ENCODE measurements at regions of chr5 and their contacts with region 1.

Region 1: DNA sequence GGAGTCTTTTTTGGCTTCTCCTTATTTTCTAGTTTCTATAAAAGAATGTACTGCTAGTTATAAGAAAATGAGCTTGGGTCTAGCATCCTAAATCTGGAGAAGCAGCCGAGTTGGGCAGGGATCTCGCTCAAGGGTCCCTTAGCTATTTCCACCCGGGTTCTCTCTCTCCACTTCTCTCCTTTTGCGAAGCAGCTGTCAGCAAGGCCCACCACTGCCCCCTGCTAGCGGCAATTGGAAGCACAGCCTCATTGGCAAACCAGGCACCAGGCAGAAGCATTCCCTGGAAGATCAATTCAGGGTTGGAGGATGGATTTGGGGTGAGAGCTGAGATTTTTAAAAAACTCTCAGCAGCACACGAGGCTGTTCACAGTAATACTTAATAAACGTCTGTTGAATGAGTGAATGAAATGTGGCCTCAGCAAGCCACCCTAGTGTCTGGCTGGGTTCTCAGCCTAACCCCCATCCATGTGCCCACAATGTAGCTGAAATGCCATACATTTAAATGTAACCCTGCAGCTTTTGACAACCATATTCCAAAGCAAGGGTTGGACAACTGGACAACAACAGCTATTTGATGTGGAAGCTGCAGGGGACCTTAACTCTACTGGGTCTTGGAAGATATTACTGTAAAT is 34.6 kb upstream of the TNIP1 start:
- DNase-seq: peak; percentile 72 to 86 (median 80)
- H3K4me3 ChIP-seq: no peak overlapping the region
- H3K27ac ChIP-seq: no peak overlapping the region
- H3K27me3 ChIP-seq: no peaks in the 10 kb centered on the region
- CTCF ChIP-seq: peak; percentile 55 to 97 (median 92)

Region 2: GRCh38 chr5:151051066-151051930 is 64.1 kb before region 1 on chr5:
- intact Hi-C with region 1: loop called (anchors 2 kb)
- DNase-seq: peak in 9 of 10 donors; percentile 57 to 82 (median 74)
- H3K4me3 ChIP-seq: no peak overlapping the region
- H3K27ac ChIP-seq: peak overlapping the region in 1 of 59 donors; percentile 36
- H3K27me3 ChIP-seq: no peaks in the 10 kb centered on the region
- CTCF ChIP-seq: peak; percentile 43 to 93 (median 83)

Region 3: GRCh38 chr5:151056379-151057325 is 58.7 kb before region 1 on chr5:
- intact Hi-C with region 1: loop called (anchors 2 kb)
- DNase-seq: no peak
- H3K4me3 ChIP-seq: no peak overlapping the region
- H3K27ac ChIP-seq: no peak overlapping the region
- H3K27me3 ChIP-seq: no peaks in the 10 kb centered on the region
- CTCF ChIP-seq: no peak

Region 4: DNA sequence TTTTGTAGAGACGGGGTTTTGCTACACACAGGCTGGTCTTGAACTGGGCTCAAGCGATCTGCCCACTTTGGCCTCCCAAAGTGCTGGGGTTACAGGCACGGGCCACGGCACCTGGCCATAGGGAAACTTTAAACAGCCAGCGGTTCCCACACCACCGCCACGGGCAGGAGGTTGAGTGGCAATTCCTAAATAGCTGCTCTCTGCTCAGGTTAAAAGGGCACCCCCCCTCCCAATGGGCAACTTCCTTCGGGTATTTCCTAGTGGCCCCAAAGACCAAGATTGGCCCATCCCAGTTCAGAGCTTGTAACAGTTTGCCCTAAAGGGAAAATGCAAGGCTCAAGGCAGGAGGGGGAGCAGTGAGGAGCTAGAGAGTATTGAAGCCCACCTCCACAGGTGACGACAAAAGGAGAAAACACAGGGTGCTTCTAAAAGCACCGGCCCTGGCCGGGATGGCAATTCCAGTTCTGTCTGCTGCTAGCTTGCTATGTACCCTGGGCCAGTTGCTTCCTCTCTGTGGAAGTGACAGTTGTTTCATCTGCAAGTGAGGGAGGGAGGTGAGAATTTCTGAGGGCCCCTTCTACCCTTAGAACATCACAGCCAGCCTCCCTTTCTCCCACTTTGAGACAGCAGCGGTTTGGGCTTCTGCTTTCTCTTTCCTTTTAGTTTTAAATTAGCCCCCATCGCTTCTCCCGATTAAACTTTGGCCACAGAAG is 17.4 kb before region 1 on chr5:
- intact Hi-C with region 1: no loop called
- DNase-seq: no peak
- H3K4me3 ChIP-seq: no peak overlapping the region
- H3K27ac ChIP-seq: peak overlapping the region in 1 of 59 donors; percentile 8
- H3K27me3 ChIP-seq: no peaks in the 10 kb centered on the region
- CTCF ChIP-seq: no peak